Pancreas (tissue), 10 donors: ENCODE measurements at regions of chr3 and their contacts with region 1.

Region 1: DNA sequence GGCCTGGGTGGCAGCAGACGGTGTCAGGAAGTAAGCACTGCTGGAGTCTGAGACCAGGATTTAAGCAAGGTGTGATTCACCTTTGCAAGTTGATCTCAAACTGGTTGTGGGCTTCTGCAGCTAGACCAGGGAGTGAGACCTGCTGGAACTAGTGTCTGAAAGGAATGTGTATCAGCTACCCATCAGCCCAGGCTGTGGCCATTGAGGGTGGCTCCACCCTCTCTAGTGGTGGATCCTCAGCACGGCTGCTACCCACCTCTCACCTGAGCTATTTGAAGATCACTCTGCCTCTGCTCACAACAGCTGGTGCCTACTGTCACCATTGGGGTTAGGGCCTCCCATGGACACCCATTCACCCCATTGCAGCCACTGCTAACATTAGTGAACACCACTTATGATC is 140.3 kb upstream of the DCBLD2 start:
- DNase-seq: no peak
- ATAC-seq: no peak
- H3K4me3 ChIP-seq: no peak overlapping the region
- H3K27ac ChIP-seq: no peak overlapping the region
- H3K4me1 ChIP-seq: no peaks in the 10 kb centered on the region
- H3K27me3 ChIP-seq: no peaks in the 10 kb centered on the region
- CTCF ChIP-seq: no peak

Region 2: GRCh38 chr3:98433764-98434163 is 608.0 kb before region 1 on chr3:
- intact Hi-C with region 1: loop called in 1 of 3 experiments (anchors 5 kb)
- DNase-seq: no peak
- ATAC-seq: no peak
- H3K4me3 ChIP-seq: no peak overlapping the region
- H3K27ac ChIP-seq: no peak overlapping the region
- H3K4me1 ChIP-seq: no peaks in the 10 kb centered on the region
- H3K27me3 ChIP-seq: no peaks in the 10 kb centered on the region
- CTCF ChIP-seq: no peak

Region 3: DNA sequence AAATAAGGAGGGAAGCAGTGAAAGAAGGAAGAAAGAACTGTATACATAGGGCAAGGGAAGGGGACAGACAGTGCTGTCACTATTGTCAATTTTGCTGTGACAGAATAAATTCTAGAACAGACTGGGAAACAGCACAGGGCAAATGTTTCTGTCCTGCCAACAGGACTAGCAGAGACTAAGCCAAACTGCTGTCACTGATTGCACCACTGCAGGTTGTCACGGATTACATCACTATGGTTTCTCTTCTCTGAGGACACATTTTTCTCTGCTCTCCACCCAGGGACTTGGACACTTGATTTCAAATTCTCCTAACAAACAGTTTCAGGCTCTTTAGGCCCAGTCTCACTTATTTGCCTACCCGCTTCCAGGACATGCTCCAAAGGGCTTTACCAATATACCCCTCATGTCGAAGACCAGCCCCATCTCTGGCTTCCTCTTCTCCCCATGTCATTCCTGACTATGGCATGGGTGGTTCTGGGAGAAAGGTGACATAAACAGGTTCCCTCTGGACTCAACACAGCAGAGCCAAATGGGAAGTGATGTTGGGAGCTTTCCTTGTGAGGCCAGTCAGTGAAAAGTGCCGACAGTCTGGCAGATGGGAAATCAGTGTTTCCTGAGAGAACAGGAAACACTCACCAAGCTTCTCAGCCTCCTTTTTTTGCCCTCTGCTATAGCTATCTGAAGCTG is 348.8 kb before region 1 on chr3:
- intact Hi-C with region 1: no loop called
- DNase-seq: no peak
- ATAC-seq: peak in 1 of 4 donors; percentile 65
- H3K4me3 ChIP-seq: no peak overlapping the region
- H3K27ac ChIP-seq: no peak overlapping the region
- H3K4me1 ChIP-seq: no peaks in the 10 kb centered on the region
- H3K27me3 ChIP-seq: no peaks in the 10 kb centered on the region
- CTCF ChIP-seq: no peak